AG04450 (cell line): ENCODE measurements at regions of chr7 and their contacts with region 1.

Region 1: DNA sequence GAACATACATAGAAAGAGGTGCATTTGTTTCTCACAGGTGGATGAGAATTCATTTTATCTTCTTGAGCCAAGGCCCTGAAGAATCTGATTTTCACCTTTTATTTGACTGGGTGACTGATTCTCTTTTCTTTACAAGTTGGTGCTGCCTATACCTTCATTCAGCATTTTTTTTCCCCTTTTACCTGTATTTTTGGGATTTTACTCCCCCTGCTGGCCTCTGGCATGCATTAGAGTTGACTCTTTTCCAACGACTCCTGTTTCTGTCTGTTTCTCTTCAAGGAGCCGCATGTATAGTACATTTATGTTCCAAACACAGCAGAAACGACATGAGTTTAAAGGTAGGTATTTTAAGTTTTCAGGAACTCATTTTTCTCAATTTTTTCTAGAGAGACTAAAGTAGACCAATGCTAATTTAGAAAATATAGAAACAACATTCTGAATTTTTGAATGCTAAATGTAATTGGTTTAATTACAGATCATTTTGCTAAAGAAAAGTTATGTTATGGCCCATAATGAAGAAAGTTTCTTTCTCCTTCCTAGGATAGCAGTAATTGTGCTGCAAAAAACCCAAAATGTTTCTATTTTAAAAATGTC is 149.8 kb upstream of the HDAC9 start:
- DNase-seq: no peak
- H3K4me3 ChIP-seq: no peak overlapping the region
- H3K27ac ChIP-seq: no peak overlapping the region
- H3K27me3 ChIP-seq: no peaks in the 10 kb centered on the region
- CTCF ChIP-seq: peak; percentile 89

Region 2: DNA sequence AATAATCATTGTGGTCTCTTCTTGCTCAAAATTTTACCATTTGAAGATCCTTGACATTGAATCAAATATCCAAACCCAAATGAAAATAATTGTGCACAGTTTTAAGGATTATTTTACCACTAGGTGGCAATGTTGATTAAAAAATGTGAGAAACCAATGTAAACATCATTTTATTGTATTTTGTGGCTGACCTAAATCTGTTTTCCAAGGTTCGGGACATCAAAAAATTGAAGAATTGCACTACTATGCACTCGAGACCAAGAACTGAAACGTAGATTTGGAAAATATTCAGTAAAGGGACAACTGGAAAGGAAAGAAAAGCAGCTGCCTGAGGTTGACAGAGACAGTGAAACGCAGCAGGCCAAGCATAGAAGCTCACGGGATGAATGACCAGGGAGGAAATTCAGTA is 664.8 kb before region 1 on chr7:
- CTCF ChIA-PET with region 1: interaction called, 38 read pairs
- POLR2A ChIA-PET with region 1: no interaction called
- DNase-seq: no peak
- H3K4me3 ChIP-seq: no peak overlapping the region
- H3K27ac ChIP-seq: no peak overlapping the region
- H3K27me3 ChIP-seq: no peaks in the 10 kb centered on the region
- CTCF ChIP-seq: peak; percentile 40

Region 3: GRCh38 chr7:17706734-17707133 is 639.0 kb before region 1 on chr7:
- CTCF ChIA-PET with region 1: interaction called, 57 read pairs
- POLR2A ChIA-PET with region 1: no interaction called
- DNase-seq: peak; percentile 18
- H3K4me3 ChIP-seq: no peak overlapping the region
- H3K27ac ChIP-seq: no peak overlapping the region
- H3K27me3 ChIP-seq: no peaks in the 10 kb centered on the region
- CTCF ChIP-seq: peak; percentile 78

Region 4: GRCh38 chr7:18538554-18539250 is 193.0 kb after region 1 on chr7:
- CTCF ChIA-PET with region 1: no interaction called
- POLR2A ChIA-PET with region 1: no interaction called
- DNase-seq: no peak
- H3K4me3 ChIP-seq: no peak overlapping the region
- H3K27ac ChIP-seq: no peak overlapping the region
- H3K27me3 ChIP-seq: no peaks in the 10 kb centered on the region
- CTCF ChIP-seq: no peak